Prostate gland (tissue), 2 donors: ENCODE measurements at regions of chr16 and their contacts with region 1.

Region 1: DNA sequence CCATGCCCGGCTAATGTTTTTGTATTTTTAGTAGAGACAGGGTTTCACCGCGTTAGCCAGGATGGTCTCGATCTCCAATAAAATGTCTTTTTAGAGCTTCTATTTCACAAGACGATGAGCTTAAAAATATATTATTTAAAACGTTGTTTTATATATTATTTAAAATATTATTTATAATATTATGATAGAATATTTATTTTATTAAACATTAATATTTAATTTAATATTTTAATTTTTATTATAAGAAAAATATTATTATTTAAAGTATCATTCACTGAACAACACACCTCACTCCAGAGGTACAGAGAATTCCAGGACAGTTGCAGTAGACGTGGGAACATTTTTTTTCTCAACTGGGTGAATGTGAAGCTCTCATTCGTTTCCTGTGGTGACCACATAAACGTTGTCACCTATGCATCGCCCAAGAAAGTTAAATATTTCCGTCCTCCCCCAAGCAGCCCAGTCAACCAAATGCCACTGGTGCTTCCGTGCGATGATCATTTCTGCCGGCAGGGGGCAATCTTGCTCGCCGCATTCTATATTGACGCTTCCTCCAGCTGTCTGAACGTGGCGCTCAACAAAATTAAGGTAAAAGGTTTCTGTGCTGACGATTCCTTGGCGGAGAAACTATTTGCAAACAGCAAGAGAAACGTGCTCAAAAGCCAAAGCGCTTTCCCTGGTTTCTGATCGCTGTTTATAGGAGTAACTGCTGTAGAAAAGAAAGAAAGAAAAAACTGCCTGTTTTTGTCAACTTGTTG is 41.7 kb upstream of the PRSS54 start:
- DNase-seq: peak; percentile 75
- H3K4me3 ChIP-seq: no peak overlapping the region
- H3K27ac ChIP-seq: no peak overlapping the region
- H3K4me1 ChIP-seq: no peaks in the 10 kb centered on the region
- H3K27me3 ChIP-seq: no peaks in the 10 kb centered on the region
- CTCF ChIP-seq: peak; percentile 70 to 97 (median 88)
- POLR2A ChIP-seq: no peak

Region 2: DNA sequence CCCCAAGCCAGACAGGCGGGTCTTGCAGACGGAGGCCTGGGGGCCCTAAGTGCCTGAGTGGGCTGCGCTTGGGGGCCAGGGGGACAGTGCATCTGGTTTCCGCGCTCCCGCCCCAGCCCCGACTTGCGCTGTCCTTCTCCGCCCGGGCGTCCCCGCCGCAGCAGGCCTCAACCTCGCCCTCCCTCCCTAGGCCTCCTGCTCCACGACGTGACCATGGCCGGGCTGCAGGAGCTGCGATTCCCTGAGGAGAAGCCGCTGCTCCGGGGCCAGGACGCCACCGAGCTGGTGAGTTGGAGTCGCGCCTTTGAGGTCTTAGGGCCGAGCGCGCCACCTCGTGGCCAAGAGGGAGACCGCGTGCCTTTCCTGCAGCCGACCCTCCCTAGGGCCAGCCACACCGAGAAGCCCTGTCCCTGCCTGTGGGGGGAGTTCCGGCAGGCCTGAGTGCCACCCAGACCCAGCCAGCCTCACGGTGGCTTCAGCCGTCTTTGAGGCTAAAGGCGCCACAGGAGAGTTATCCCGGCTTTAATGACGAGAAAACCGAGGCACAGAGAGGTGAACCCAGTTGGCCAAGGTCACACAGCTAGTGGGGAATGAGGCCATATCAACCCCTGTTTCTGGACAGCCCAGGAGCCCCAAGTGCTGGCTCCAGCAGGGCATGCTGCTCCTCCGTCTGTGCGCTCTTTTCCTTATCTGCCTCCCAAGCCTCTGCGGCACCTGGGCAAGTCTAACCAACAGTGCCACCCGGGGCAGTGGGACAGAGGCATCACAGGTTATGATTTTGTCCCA is 151.2 kb after region 1 on chr16:
- intact Hi-C with region 1: loop called (anchors 2 kb)
- DNase-seq: peak; percentile 77
- H3K4me3 ChIP-seq: no peak overlapping the region
- H3K27ac ChIP-seq: no peak overlapping the region
- H3K4me1 ChIP-seq: no peaks in the 10 kb centered on the region
- H3K27me3 ChIP-seq: no peaks in the 10 kb centered on the region
- CTCF ChIP-seq: peak; percentile 82 to 93 (median 89)
- POLR2A ChIP-seq: no peak

Region 3: DNA sequence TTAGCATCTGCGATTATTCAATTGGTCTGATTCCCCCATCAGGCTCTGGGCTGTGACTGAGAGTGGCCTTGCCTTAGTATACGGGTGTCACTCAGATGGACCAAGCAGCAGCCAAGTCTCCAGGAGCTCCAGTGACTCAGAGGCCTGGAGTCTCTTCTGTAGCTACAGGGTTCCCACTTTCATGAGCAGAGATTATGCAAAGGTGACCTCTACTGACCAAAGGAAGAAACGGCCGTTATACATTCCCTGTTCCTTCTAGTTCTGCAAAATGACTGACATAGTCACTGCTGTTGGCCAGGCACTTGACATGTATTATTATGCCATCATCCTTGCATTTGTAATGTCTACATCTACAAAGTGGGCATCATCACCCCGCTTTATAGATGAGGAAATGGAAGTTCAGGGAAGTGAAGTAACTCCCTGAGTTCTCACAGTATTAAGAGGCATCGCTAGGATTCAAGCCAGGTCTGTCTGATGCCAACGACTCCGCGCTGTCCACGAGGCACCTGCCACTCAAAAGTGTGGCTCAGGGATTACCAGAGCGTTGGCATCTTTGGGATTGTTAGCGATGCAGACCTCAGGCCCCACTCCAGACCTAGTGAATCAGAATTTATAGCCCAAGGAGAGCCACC is 324.8 kb after region 1 on chr16:
- intact Hi-C with region 1: loop called (anchors 10 kb)
- DNase-seq: peak; percentile 39
- H3K4me3 ChIP-seq: no peak overlapping the region
- H3K27ac ChIP-seq: no peak overlapping the region
- H3K4me1 ChIP-seq: no peaks in the 10 kb centered on the region
- H3K27me3 ChIP-seq: no peaks in the 10 kb centered on the region
- CTCF ChIP-seq: peak in 3 of 4 experiments; percentile 31 to 57 (median 43)
- POLR2A ChIP-seq: no peak

Region 4: DNA sequence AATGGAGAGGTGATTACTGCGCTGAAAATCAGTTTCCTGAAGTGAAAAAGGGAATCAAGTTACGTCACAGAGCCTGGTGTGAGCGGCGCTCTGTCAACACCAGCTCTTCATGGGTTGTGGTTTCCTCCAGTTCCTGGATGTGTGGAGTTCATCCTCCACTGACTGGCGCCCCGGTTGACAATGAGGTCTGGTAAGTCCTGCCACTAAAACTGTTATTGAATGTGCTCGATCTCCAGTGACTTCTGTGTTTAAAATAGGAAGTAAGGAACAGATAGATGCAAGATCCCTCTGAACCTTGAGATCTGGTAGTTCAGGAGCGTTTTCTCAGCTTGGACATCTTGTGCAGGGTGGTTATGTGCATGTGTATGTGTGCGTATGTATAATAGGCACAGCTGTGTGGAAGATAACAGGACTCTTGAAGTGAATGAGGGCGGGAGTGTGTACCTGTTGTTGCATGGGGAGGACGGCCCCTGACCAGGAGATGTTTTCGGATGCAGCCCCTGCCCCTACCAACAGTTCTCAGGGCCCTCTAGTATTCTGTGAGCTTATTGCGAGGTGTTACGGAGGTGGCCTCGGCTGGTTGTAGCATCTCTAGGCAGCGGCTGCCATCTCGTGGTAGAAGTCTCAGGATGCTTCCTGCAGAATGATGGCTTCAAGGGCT is 419.6 kb after region 1 on chr16:
- intact Hi-C with region 1: loop called (anchors 10 kb)
- DNase-seq: peak; percentile 77
- H3K4me3 ChIP-seq: no peak overlapping the region
- H3K27ac ChIP-seq: no peak overlapping the region
- H3K4me1 ChIP-seq: no peaks in the 10 kb centered on the region
- H3K27me3 ChIP-seq: no peaks in the 10 kb centered on the region
- CTCF ChIP-seq: peak in 3 of 4 experiments; percentile 64 to 75 (median 73)
- POLR2A ChIP-seq: no peak